Naive thymus-derived CD4-positive, alpha-beta T cell (primary cell): ENCODE measurements at regions of chr10 and their contacts with region 1.

Region 1: GRCh38 chr10:15168781-15169554 is 475 bp upstream of the NMT2 start:
- DNase-seq: peak; percentile 84 to 97 (median 91)
- ATAC-seq: peak; percentile 93
- H3K4me3 ChIP-seq: peak overlapping the region; percentile 57
- H3K4me3 Mint-ChIP-seq: peak overlapping the region; percentile 80 to 97 (median 89)
- H3K27ac ChIP-seq: peak overlapping the region; percentile 66
- H3K27ac Mint-ChIP-seq: peak overlapping the region; percentile 91 to 95 (median 95)
- H3K4me1 ChIP-seq: peaks cover 41 to 44% of the 10 kb centered on the region in 2 donors
- H3K4me1 Mint-ChIP-seq: peaks cover 47 to 72% (median 63%) of the 10 kb centered on the region in 7 donors
- H3K27me3 ChIP-seq: no peaks in the 10 kb centered on the region
- H3K27me3 Mint-ChIP-seq: no peaks in the 10 kb centered on the region

Region 2: DNA sequence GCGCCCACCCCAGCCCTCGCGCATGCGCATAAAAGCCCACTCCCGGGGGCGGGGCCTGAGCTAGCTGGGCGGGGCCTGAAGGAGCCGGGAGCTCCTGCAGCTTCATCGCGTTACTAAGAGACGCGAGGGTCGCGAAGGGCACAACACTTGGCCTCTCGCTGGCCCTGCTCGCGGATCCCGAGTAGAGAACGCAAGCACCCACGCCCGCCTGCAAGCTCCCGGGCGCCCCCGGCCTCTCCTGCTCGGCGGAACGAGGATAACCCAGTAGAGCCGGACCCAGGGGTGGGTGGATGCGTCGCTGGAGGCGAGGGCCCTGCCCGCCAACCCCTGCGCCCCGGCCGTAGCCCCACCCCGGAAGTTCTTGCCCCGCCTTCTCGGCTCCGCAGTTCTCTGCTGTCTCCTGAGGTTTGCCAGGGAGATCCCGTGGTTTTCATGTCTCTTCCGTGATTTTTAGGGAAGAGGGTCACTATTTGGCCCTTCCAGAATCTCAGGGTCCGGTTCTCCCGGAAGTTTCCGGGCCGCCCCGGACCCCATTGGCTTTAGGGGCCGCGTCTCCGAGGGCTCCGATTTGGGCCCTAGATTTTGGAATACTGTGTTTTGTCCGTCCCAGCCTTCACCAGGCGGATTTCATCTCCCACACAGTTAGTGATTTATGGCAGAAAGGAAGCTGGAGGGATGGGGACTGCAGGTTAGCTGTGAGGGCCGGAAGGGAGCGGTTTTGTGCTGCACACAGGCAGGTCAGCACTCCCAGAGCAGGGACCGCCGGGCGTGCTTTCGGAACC is 209.5 kb before region 1 on chr10 and contains the start of gene MEIG1:
- CTCF ChIA-PET with region 1: no interaction called
- POLR2A ChIA-PET with region 1: interaction called, 3 read pairs
- intact Hi-C with region 1: loop called (anchors 1 kb)
- DNase-seq: peak; percentile 82 to 99 (median 90)
- ATAC-seq: peak; percentile 93
- H3K4me3 ChIP-seq: peak within 1 kb of the TSS; percentile 97
- H3K4me3 Mint-ChIP-seq: peak within 1 kb of the TSS; percentile 91 to 99 (median 96)
- H3K27ac ChIP-seq: peak within 1 kb of the TSS; percentile 81
- H3K27ac Mint-ChIP-seq: peak within 1 kb of the TSS; percentile 93 to 98 (median 96)
- H3K4me1 ChIP-seq: peaks cover 8 to 10% of the 10 kb centered on the region in 2 donors
- H3K4me1 Mint-ChIP-seq: peaks cover 6 to 42% (median 34%) of the 10 kb centered on the region in 7 donors
- H3K27me3 ChIP-seq: no peaks in the 10 kb centered on the region
- H3K27me3 Mint-ChIP-seq: no peaks in the 10 kb centered on the region
- total RNA-seq, gene MEIG1: 1.2 to 1.9 TPM in 2 of 5 experiments, not detected in the others

Region 3: GRCh38 chr10:15106352-15107013 is 62.5 kb before region 1 on chr10:
- CTCF ChIA-PET with region 1: interaction called, 5 read pairs
- POLR2A ChIA-PET with region 1: interaction called, 3 read pairs
- intact Hi-C with region 1: loop called in 1 of 2 experiments (anchors 2 kb)
- DNase-seq: peak; percentile 41 to 67 (median 58)
- ATAC-seq: peak; percentile 99
- H3K4me3 ChIP-seq: no peak overlapping the region
- H3K4me3 Mint-ChIP-seq: no peak overlapping the region
- H3K27ac ChIP-seq: peak overlapping the region; percentile 9
- H3K27ac Mint-ChIP-seq: peak overlapping the region; percentile 26 to 88 (median 68)
- H3K4me1 ChIP-seq: no peaks in the 10 kb centered on the region
- H3K4me1 Mint-ChIP-seq: peaks cover 3 to 9% (median 5%) of the 10 kb centered on the region in 7 donors
- H3K27me3 ChIP-seq: no peaks in the 10 kb centered on the region
- H3K27me3 Mint-ChIP-seq: no peaks in the 10 kb centered on the region

Region 4: DNA sequence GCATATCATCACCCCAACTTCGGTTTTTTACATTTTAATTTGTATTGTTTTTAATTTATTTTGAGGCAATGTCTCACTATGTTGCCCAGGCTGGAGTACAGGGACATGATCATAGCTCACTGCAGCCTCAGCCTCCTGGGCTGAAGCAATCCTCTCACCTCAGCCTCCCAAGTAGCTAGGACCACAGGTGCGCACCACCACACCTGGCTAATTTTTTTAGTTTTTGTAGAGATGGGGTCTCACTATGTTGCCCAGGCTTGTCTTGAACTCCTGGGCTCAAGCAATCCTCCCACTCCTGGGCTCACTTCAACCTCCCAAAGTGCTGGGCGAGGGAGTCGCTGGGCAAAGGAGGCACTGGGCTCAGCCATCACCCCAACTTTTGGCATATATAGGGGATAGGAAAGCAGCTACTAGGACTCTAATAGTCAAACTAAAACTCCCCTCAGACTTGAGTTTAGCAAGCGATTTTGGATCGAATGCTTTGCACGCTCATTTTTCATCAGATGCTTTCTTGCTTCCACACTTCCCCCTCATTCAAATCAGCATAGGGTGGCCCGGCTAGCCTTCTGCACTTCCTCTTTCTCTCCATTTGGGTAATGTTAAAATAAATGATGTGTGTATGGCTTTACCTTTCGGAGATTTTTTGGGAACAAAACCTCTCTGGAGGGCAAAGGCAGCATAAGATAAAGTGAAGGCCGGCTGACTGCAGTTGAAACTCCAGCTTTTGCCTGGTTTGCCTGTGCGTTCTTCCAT is 20.3 kb after region 1 on chr10:
- CTCF ChIA-PET with region 1: interaction called, 11 read pairs
- POLR2A ChIA-PET with region 1: interaction called, 217 read pairs
- intact Hi-C with region 1: loop called (anchors 1 kb)
- DNase-seq: no peak
- ATAC-seq: peak; percentile 55
- H3K4me3 ChIP-seq: no peak overlapping the region
- H3K4me3 Mint-ChIP-seq: peak overlapping the region in 9 of 10 donors; percentile 39 to 79 (median 66)
- H3K27ac ChIP-seq: no peak overlapping the region
- H3K27ac Mint-ChIP-seq: peak overlapping the region; percentile 59 to 94 (median 88)
- H3K4me1 ChIP-seq: peaks cover 10 to 48% of the 10 kb centered on the region in 2 donors
- H3K4me1 Mint-ChIP-seq: peaks cover 22 to 73% (median 60%) of the 10 kb centered on the region in 7 donors
- H3K27me3 ChIP-seq: no peaks in the 10 kb centered on the region
- H3K27me3 Mint-ChIP-seq: no peaks in the 10 kb centered on the region

Region 5: DNA sequence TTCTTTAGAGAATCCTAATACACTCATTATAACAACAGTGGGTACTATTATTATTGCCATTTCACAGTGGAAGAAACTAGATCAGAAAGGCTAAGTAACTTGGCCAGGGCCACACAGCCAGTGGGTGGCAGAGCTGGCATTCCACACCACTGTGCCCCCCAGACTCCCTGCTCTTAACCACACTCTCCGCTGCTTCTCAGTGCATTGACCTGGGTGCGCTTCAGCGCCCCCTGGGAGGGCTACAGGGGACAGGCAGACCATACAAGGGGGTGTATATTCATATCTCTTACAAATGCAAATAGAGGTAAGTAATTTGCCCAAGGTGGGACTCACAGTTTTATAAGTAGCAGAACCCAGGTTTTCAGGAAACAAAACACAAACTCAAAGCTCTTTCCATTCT is 76.6 kb after region 1 on chr10:
- CTCF ChIA-PET with region 1: interaction called, 3 read pairs
- POLR2A ChIA-PET with region 1: no interaction called
- intact Hi-C with region 1: loop called in 1 of 2 experiments (anchors 1 kb)
- DNase-seq: peak in 4 of 9 donors; percentile 13 to 33 (median 26)
- ATAC-seq: peak; percentile 47
- H3K4me3 ChIP-seq: no peak overlapping the region
- H3K4me3 Mint-ChIP-seq: no peak overlapping the region
- H3K27ac ChIP-seq: no peak overlapping the region
- H3K27ac Mint-ChIP-seq: no peak overlapping the region
- H3K4me1 ChIP-seq: no peaks in the 10 kb centered on the region
- H3K4me1 Mint-ChIP-seq: peaks cover 2 to 23% (median 15%) of the 10 kb centered on the region in 7 donors
- H3K27me3 ChIP-seq: no peaks in the 10 kb centered on the region
- H3K27me3 Mint-ChIP-seq: no peaks in the 10 kb centered on the region